Activated T-helper 1 cell treated with anti-CD3 and anti-CD28 coated beads, Interleukin-12 subunit alpha, Interleukin-12 subunit beta, Interleukin-2, Interleukin-4 antibody, amounts not matched to agents 30 ng/mL and 10 ng/mL and 1 ng/mL, durations not matched to agents 14 hours and 24 hours and 36 hours (primary cell): ENCODE measurements at regions of chr5 and their contacts with region 1.

Region 1: GRCh38 chr5:176579323-176579722 is 30.2 kb downstream of the CDHR2 start:
- DNase-seq: no peak
- H3K4me3 Mint-ChIP-seq: no peak overlapping the region
- H3K27ac Mint-ChIP-seq: no peak overlapping the region
- H3K4me1 Mint-ChIP-seq: no peaks in the 10 kb centered on the region
- H3K27me3 Mint-ChIP-seq: no peaks in the 10 kb centered on the region

Region 2: DNA sequence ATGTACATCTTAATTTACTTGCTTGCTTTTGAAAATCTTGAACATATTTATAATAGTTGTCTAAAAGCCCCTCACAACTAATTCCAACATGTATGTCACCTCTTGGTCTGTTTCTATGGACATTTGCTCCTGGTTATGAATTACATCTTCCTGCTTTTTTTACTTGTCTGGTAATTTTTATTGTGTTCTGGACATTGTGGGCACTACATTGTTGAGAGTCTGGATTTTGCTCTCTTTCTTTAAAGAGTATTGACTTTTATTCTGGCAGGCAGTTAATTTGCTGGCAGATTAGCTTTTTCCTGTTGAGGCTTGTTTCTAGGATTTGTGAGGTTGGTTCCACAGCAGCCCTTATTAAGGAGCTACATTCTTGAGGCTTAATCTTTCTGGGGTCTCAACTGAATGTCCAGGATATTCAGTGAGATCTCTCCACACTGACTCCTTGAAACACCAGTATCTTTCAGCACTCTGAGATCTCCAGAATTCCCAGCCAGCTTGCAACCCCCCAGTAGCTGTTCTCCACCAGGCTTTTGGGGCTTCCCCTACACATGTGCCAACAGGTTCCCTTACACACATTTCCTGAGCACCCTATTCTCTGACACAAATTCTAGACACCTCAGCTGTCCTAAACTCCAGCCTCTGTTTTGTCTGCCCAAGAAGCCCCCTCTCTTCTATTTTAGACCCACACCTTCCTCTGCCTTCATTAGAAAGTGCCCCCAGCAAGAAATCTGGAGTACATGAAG is 245.1 kb before region 1 on chr5:
- intact Hi-C with region 1: no loop called
- DNase-seq: no peak
- H3K4me3 Mint-ChIP-seq: no peak overlapping the region
- H3K27ac Mint-ChIP-seq: no peak overlapping the region
- H3K4me1 Mint-ChIP-seq: peaks cover 8% of the 10 kb centered on the region
- H3K27me3 Mint-ChIP-seq: no peaks in the 10 kb centered on the region

Region 3: DNA sequence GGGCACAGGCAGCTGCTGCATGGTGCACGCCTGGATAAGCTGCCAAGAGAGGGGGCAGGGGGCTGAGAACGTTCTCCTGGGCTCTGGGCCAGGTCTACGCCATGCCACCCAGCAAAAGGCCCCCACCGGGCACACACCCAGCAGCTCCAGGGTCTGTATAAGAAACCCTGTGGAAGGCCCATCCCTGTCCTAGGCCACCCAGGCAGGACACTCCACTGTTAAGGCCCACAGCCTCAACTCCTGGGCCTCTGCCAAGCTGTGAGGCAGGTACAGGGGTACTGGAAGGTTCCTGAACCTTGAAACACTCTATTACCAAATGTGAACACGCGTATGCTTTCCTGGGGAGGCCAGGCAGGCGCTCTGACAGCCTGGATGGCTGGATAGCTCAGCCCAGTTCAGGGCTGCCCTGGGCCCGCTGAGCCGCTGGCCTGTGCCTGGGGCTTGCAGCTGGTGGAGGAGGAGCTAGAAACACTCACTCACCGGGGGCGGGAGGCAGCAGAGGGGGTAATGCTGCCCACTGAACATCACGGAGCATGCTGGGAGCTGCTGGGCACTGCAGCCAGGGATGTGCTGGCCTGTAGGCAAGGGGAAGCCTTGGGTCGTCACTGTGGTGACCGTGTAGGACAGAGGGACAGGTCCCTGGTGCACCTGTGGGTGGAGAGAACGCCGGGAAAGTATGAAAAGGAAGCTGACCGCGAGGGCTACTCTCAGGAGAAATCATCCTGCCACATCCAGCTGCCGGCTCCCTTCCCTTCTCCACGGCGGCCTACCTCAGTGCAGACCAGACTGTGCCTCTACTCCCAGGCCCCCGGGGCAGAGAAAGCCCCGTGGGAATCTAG is 48.1 kb before region 1 on chr5:
- intact Hi-C with region 1: loop called (anchors 1 kb)
- DNase-seq: no peak
- H3K4me3 Mint-ChIP-seq: peak overlapping the region; percentile 71
- H3K27ac Mint-ChIP-seq: peak overlapping the region; percentile 84
- H3K4me1 Mint-ChIP-seq: peaks cover 39% of the 10 kb centered on the region
- H3K27me3 Mint-ChIP-seq: no peaks in the 10 kb centered on the region